Motor neuron (in vitro differentiated cells): ENCODE measurements at regions of chr13 and their contacts with region 1.

Region 1: DNA sequence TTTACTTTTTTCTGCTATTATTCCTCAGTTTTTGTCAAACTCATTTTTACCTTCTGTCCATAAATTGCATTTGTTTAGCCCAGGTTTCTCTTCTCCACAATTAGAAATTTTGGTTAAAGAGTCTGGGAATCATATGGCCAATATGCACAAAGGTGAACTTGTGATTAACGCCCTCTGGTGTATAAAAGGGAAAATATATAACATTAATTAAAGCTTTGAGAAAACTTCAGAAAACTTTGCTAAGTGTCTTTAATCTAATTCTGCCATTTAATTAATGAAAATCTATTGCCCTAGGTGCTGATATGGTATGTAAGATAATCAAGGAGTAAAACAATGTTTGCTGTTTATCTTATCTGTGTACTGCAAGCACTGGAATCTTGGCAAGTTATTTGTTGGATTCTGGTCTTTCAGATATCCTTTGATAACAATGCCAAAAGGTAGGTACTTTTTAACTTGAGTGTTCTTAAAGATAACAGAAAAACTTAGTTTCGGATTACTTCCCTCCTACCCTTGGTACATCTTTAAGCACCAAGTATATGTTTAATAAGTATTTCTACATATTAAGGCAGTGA is 402.6 kb downstream of the SUCLA2 start:
- ATAC-seq: no peak
- H3K4me3 ChIP-seq: no peak overlapping the region
- H3K27ac ChIP-seq: no peak overlapping the region
- H3K4me1 ChIP-seq: no peaks in the 10 kb centered on the region

Region 2: GRCh38 chr13:46687810-46688209 is 910.6 kb before region 1 on chr13:
- in situ Hi-C with region 1: no loop called
- ATAC-seq: peak in 3 of 8 experiments; percentile 61 to 83 (median 78)
- H3K4me3 ChIP-seq: no peak overlapping the region
- H3K27ac ChIP-seq: no peak overlapping the region
- H3K4me1 ChIP-seq: no peaks in the 10 kb centered on the region

Region 3: DNA sequence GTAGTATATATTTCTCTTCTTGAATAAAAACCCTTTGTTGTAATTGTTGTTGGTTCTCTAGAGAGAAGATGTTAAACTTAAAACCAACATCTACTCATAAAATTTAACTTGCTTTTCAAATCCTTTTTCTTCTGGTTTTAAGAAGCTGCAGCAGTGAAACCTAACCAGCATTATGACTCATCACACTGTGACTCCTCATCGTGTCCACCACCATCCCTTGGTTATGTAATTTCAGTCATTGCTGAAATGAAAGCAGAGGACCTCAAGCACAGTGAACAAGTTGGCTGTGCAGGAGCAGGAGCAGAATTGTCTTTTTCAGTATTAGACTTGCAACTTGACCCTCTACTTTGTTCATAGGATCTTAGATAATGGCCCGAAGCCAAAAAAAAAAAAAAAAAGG is 636.7 kb before region 1 on chr13:
- in situ Hi-C with region 1: loop called in 1 of 9 experiments (anchors 25 kb)
- ATAC-seq: peak in 4 of 8 experiments; percentile 27 to 93 (median 62)
- H3K4me3 ChIP-seq: no peak overlapping the region
- H3K27ac ChIP-seq: no peak overlapping the region
- H3K4me1 ChIP-seq: no peaks in the 10 kb centered on the region

Region 4: GRCh38 chr13:47708386-47708785 is 110.0 kb after region 1 on chr13:
- in situ Hi-C with region 1: no loop called
- ATAC-seq: peak in 1 of 8 experiments; percentile 51
- H3K4me3 ChIP-seq: no peak overlapping the region
- H3K27ac ChIP-seq: no peak overlapping the region
- H3K4me1 ChIP-seq: peaks cover 0 to 11% of the 10 kb centered on the region in 2 donors

Region 5: GRCh38 chr13:47964863-47965262 is 366.4 kb after region 1 on chr13:
- in situ Hi-C with region 1: no loop called
- ATAC-seq: no peak
- H3K4me3 ChIP-seq: no peak overlapping the region
- H3K27ac ChIP-seq: no peak overlapping the region
- H3K4me1 ChIP-seq: no peaks in the 10 kb centered on the region

Region 6: DNA sequence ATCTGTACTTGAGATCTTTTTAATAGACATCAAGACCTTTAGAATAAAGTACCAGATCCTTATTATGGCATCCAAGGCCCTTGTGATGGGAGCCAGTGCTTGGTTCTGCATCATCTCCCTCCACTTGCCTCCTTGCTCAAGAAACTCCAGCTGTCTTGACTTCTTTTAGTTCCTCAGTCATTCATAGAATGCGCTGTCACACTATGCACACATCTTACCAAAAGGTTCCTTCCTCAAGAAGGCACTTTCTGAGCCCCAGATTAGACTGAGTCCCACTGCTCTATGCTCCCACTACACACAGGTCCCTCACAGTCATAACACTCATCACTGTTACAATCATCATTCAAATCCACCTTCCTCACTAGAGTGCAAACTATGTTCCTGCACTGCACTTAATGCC is 576.8 kb after region 1 on chr13:
- in situ Hi-C with region 1: no loop called
- ATAC-seq: no peak
- H3K4me3 ChIP-seq: no peak overlapping the region
- H3K27ac ChIP-seq: no peak overlapping the region
- H3K4me1 ChIP-seq: no peaks in the 10 kb centered on the region